ENCODE measurements at regions of chr10 and their contacts with region 1.

Region 1: DNA sequence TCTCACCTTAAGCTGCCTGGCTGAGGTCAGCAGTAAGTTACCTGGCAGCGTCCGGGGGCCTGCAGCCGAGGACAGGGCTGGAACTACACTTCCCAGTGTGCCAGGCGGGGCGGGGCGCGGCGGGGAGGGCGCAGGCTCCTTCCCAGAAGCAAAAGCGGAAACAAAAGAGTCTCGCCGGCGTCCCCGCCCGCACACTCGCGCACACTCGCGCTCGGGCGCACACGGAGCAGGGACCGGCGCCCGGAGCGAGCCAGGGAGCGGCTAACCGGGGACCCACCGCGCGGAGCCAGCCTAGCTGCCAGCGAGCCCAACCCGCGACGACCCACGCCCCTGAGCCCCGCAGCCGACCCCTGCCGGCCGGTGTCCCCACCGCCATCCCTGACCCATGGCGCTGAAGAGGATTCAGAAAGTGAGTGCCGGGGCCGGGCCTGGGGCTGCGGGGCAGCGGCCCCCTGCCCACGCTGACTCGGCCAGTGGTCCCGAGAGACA is at the start of gene UBE2D1:
- DNase-seq: peak; percentile 47 to 83
- ATAC-seq: peak; percentile 93 to 94 (median 93)
- H3K4me3 ChIP-seq: peak within 1 kb of the TSS; percentile 64
- H3K4me3 Mint-ChIP-seq: peak within 1 kb of the TSS; percentile 95
- H3K27ac ChIP-seq: peak within 1 kb of the TSS; percentile 33
- H3K27ac Mint-ChIP-seq: peak within 1 kb of the TSS; percentile 78 to 81
- H3K4me1 ChIP-seq: peaks cover 9% of the 10 kb centered on the region
- H3K4me1 Mint-ChIP-seq: peaks cover 10 to 26% of the 10 kb centered on the region in 2 donors
- H3K27me3 ChIP-seq: no peaks in the 10 kb centered on the region
- H3K27me3 Mint-ChIP-seq: peaks cover 10 to 11% of the 10 kb centered on the region in 2 donors
- CTCF ChIP-seq: no peak
- total RNA-seq, gene UBE2D1: 14.0 to 14.5 (median 14.4) TPM

Region 2: DNA sequence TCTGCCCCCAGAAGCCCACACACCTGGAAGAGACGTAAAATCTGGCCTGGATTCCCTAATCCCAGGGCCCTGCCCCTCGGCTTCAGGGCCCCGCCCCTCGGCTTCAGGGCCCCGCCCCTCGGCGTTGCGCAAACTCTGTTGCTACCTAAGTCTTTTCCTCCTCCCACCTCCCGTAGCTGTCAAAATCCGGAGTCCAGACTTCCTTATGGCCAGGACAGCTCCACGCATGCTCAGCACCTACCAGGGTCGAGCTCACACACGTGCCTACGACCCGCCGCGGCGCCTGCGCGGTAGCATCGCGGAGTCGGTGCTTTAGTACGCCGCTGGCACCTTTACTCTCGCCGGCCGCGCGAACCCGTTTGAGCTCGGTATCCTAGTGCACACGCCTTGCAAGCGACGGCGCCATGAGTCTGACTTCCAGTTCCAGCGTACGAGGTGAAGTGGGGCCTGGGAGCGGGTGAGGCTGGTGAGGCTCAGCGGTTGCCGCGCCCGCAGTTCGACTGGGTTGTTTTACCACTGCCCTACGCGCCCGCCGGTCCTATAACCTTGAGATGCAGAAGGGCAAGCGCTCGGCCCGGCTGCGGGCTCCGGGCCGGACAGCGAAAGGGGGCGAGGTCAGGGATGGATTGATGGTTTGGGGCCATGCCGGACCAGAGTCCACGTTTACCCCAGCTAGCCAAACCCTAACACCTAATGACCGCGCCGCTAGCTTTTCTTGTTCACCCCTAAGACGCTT is 65.8 kb before region 1 on chr10 and contains the start of gene CISD1:
- intact Hi-C with region 1: loop called (anchors 10 kb)
- DNase-seq: peak; percentile 82 to 100
- ATAC-seq: peak; percentile 54 to 71 (median 69)
- H3K4me3 ChIP-seq: peak within 1 kb of the TSS; percentile 68
- H3K4me3 Mint-ChIP-seq: peak within 1 kb of the TSS; percentile 96
- H3K27ac ChIP-seq: peak within 1 kb of the TSS; percentile 90
- H3K27ac Mint-ChIP-seq: peak within 1 kb of the TSS; percentile 96 to 99
- H3K4me1 ChIP-seq: peaks cover 21% of the 10 kb centered on the region
- H3K4me1 Mint-ChIP-seq: peaks cover 50 to 52% of the 10 kb centered on the region in 2 donors
- H3K27me3 ChIP-seq: no peaks in the 10 kb centered on the region
- H3K27me3 Mint-ChIP-seq: no peaks in the 10 kb centered on the region
- CTCF ChIP-seq: no peak
- total RNA-seq, gene CISD1: 4.2 to 10.4 (median 5.3) TPM

Measured in natural killer cell (primary cell).